ENCODE measurements at regions of chr16 and their contacts with region 1.

Region 1: DNA sequence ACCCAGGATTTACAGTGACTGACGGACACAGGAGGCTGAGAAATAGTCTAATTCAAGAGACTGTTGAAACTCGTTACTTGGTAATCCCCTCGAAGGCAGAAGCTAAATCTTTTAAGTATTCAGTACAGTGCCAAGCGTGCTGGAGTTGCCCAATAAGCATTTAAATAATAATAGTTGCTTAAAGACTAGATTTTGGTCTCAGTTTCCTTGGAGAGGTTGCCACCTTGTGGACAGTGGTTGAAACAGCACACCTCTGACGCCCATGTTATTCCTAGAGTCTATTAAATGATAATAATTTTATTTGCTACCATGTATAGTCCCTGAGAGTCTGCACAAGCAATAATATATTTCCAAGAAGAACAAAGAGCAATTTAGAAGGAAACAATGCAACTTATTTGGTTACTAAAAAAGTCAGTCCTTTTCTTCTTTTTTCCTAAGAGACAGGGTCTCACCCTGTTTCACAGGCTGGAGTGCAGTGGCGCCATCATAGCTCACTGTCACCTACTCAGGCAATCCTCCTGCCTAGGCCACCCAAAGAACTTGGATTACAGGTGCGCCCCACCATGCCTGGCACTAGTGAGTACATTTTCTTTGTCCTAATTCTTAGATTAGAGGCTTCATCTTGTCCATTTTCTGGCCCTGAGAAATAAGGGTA is 138.0 kb upstream of the NUDT7 start:
- DNase-seq: peak; percentile 26
- H3K4me3 ChIP-seq: no peak overlapping the region
- H3K27ac ChIP-seq: no peak overlapping the region
- H3K4me1 ChIP-seq: no peaks in the 10 kb centered on the region
- H3K27me3 ChIP-seq: no peaks in the 10 kb centered on the region
- CTCF ChIP-seq: peak; percentile 84 to 92 (median 88)
- EP300 ChIP-seq: no peak
- POLR2A ChIP-seq: no peak

Region 2: DNA sequence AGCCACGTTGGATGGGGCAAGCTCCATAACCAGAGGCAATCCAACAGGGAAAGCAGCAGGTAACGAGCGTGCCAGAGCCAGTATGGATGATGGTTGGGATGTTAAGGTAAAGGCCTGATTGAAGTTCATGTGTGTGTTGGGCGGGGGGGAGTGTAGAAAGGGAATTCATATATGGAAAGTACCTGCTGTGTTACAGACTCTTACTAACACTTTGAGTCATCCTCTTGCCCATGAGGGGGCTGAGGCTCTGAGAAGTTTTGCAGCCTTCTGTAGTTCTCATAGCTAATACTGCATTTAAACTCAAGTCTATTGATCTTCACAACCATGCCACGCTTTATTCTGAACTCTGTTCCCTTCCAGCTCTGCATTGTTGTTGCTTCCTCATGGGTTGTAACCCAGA is 356.6 kb before region 1 on chr16:
- in situ Hi-C with region 1: loop called in 1 of 4 experiments (anchors 5 kb)
- intact Hi-C with region 1: no loop called
- DNase-seq: no peak
- H3K4me3 ChIP-seq: no peak overlapping the region
- H3K27ac ChIP-seq: no peak overlapping the region
- H3K4me1 ChIP-seq: no peaks in the 10 kb centered on the region
- H3K27me3 ChIP-seq: peaks cover 17% of the 10 kb centered on the region
- CTCF ChIP-seq: no peak
- EP300 ChIP-seq: no peak
- POLR2A ChIP-seq: no peak

Region 3: GRCh38 chr16:77236063-77236511 is 348.2 kb before region 1 on chr16:
- in situ Hi-C with region 1: loop called in 3 of 4 experiments (anchors 5 kb)
- intact Hi-C with region 1: loop called (anchors 5 kb)
- DNase-seq: peak; percentile 89
- H3K4me3 ChIP-seq: peak overlapping the region in 1 of 4 donors; percentile 10
- H3K27ac ChIP-seq: no peak overlapping the region
- H3K4me1 ChIP-seq: peaks cover 0 to 2% (median 0%) of the 10 kb centered on the region in 4 donors
- H3K27me3 ChIP-seq: peaks cover 25% of the 10 kb centered on the region
- CTCF ChIP-seq: peak; percentile 97 to 99 (median 99)
- EP300 ChIP-seq: no peak
- POLR2A ChIP-seq: no peak

Region 4: GRCh38 chr16:77480681-77481315 is 103.5 kb before region 1 on chr16:
- in situ Hi-C with region 1: no loop called
- intact Hi-C with region 1: no loop called
- DNase-seq: no peak
- H3K4me3 ChIP-seq: no peak overlapping the region
- H3K27ac ChIP-seq: no peak overlapping the region
- H3K4me1 ChIP-seq: no peaks in the 10 kb centered on the region
- H3K27me3 ChIP-seq: no peaks in the 10 kb centered on the region
- CTCF ChIP-seq: no peak
- EP300 ChIP-seq: no peak
- POLR2A ChIP-seq: no peak